ENCODE measurements at regions of chr11 and their contacts with region 1.

Region 1: DNA sequence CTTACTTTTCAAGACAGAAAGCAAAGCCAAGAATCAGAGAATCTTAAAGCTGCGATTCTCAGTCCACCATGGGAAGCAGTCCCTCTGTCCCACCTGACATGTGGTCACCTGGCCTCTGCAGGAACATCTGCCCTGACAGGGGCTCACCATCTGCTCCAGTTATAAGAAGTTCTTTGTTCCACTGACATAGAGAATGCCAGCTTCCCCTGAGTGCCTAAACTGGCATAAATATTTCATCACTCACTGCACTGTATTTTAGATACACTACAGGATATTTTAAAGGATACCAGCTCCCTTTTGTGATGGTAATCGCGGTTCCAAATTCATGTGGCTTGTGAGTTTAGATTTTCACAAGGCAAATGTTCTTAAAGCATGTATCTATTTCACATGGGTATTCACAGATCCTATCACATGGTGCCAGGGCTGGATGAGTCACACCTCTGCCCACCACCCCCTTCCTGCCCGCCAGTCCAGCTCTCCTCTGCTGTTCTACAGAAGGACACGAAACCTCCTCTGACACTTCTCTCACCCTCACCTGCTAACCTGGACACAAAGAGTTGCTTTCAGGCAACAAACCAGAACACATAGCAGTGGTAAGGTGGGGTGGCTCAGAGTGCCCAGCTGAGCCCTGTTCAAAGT is 105.5 kb downstream of the KCNC1 start:
- DNase-seq: no peak
- CTCF ChIP-seq: no peak

Region 2: DNA sequence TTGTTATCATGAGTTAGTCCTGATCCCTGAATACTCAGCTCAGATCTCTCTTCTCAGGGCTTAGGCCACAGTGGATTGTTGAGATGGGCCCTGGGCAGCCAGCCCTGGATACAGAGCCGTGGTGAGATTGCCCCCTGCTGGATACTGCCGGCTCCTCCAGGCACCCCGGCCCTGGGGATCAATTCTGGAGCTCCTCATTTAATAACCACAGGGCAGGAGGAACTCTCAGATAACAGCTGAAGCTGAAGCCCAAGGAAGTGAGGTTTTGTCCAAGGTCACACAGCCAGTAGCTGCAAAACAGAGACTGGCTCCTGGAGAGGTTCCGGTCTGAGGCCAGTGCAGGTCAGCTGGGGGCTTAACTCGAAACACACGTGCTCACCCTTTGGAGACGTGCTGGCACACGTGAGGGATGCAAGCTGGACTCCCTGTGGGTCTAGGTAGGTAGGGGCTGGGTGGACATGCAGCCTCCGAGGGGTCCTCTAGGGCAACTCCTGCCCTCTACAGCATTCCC is 311.9 kb before region 1 on chr11:
- CTCF ChIA-PET with region 1: no interaction called
- POLR2A ChIA-PET with region 1: no interaction called
- DNase-seq: peak; percentile 78
- CTCF ChIP-seq: peak; percentile 58

Region 3: GRCh38 chr11:17629113-17629512 is 211.0 kb before region 1 on chr11:
- CTCF ChIA-PET with region 1: no interaction called
- POLR2A ChIA-PET with region 1: no interaction called
- DNase-seq: no peak
- CTCF ChIP-seq: no peak

Region 4: DNA sequence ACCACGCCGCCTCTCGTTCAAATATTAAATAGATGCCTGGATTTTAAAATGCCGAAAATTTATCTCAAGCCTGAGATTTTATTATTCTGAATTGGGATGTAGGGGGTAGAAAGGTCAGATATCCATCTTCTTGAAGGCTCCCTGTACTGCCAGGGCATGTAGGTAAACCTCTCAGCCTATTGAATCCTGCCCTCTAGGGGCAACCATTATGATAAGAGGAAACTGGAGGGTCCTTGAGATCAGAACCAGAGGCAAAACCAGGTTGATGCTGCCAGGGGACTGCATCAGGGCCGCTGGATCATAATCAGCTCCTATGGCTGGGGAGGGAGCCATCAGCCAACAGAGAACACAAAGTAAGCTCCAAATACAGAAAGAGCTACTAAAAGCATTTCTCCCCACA is 13.1 kb before region 1 on chr11:
- CTCF ChIA-PET with region 1: interaction called, 14 read pairs
- POLR2A ChIA-PET with region 1: no interaction called
- DNase-seq: no peak
- CTCF ChIP-seq: no peak